PC-9 (cell line): ENCODE measurements at regions of chr22 and their contacts with region 1.

Region 1: DNA sequence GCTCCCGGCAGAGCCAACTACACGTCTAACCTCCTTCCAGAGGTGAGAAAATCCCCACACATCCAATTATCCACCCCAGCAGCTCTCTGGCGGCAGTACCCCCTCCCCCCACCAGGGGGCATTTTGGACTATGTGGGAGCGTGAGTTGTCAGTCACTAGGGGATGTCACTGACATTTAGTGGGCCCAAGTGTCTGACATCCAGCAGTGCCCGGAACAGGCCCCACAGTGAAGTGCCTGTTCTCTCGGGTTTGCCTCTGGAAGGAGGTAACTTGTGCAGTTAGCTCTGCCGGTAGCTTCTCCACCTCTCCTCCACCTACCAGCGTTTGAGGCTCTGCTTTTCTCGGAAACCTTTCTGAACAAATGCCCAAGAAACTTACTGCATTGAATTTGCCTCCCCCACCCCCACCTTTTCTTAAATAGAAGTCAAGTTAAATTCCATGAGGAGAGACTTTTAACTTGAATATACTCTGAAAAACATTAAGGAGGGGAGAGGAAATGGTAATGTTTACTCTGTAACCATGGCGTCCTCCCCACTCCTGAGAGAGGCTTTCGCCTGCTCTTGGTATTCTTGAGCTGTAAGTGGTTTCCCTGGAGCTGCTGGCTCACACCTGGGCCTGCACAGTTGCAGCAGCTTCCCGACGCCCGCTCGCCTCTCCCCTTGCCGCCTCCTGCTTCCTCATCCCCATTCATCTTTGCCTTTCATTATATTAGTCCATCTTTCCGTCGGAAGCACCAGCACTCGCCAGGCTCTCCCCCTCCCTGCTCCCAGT is 112.8 kb downstream of the WNT7B start:
- DNase-seq: peak; percentile 49 to 68
- H3K4me3 ChIP-seq: no peak overlapping the region
- H3K27ac ChIP-seq: no peak overlapping the region
- H3K4me1 ChIP-seq: peaks cover 7% of the 10 kb centered on the region; the same call in 1 of the 2 replicates
- H3K27me3 ChIP-seq: no peaks in the 10 kb centered on the region
- CTCF ChIP-seq: peak; percentile 98

Region 2: GRCh38 chr22:45887202-45888131 is 23.3 kb after region 1 on chr22:
- CTCF ChIA-PET with region 1: no interaction called
- POLR2A ChIA-PET with region 1: no interaction called
- intact Hi-C with region 1: loop called (anchors 2 kb)
- DNase-seq: peak; percentile 90 to 96
- H3K4me3 ChIP-seq: no peak overlapping the region
- H3K27ac ChIP-seq: no peak overlapping the region
- H3K4me1 ChIP-seq: peaks cover 15% of the 10 kb centered on the region
- H3K27me3 ChIP-seq: no peaks in the 10 kb centered on the region
- CTCF ChIP-seq: no peak

Region 3: GRCh38 chr22:45903355-45904149 is 39.4 kb after region 1 on chr22:
- CTCF ChIA-PET with region 1: interaction called, 10 read pairs
- POLR2A ChIA-PET with region 1: interaction called, 3 read pairs
- intact Hi-C with region 1: no loop called
- DNase-seq: peak; percentile 72 to 87
- H3K4me3 ChIP-seq: peak overlapping the region; percentile 37; the same call in 1 of the 2 replicates
- H3K27ac ChIP-seq: no peak overlapping the region
- H3K4me1 ChIP-seq: peaks cover 23% of the 10 kb centered on the region
- H3K27me3 ChIP-seq: no peaks in the 10 kb centered on the region
- CTCF ChIP-seq: no peak

Region 4: DNA sequence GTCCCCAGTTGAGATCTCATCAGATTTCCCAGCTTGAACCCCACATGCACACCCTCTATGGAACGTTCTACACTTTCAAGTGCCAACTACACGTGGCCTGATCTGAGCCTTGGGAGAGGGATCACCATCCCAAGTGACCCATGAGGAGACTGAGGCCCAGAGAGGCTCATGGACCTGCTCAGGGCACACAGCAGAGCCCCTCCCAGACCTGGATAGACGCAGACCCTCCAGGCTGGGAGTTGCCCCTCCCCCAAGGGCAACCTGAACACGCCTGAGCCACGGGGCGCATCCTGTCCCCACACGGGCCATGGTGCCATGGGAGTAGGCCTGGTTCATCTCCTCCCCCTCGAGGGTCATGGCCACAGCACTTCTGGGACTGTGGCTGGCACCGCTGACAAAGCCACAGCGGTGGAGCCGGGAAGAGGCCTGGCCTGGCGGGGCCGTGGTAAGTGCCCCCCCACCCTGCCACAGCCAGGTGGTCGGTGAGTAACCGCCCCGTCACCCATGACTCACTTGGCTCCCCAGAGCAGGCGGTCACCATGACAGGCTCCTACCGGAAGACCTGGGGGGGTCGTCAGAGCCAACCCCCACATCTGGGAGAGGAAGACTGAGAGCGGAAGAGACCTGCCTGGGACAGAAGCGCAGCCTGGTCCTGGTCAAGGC is 104.7 kb after region 1 on chr22:
- CTCF ChIA-PET with region 1: interaction called, 7 read pairs
- POLR2A ChIA-PET with region 1: interaction called, 17 read pairs
- intact Hi-C with region 1: loop called (anchors 2 kb)
- DNase-seq: peak in 1 of 2 experiments; percentile 79
- H3K4me3 ChIP-seq: peak overlapping the region; percentile 38; the same call in 1 of the 2 replicates
- H3K27ac ChIP-seq: peak overlapping the region; percentile 62
- H3K4me1 ChIP-seq: peaks cover 41% of the 10 kb centered on the region
- H3K27me3 ChIP-seq: no peaks in the 10 kb centered on the region
- CTCF ChIP-seq: no peak

Region 5: GRCh38 chr22:46084943-46085830 is 221.0 kb after region 1 on chr22:
- CTCF ChIA-PET with region 1: no interaction called
- POLR2A ChIA-PET with region 1: interaction called, 18 read pairs
- intact Hi-C with region 1: no loop called
- DNase-seq: no peak
- H3K4me3 ChIP-seq: peak overlapping the region; percentile 25; the same call in 1 of the 2 replicates
- H3K27ac ChIP-seq: peak overlapping the region; percentile 74
- H3K4me1 ChIP-seq: peaks cover 30% of the 10 kb centered on the region
- H3K27me3 ChIP-seq: no peaks in the 10 kb centered on the region
- CTCF ChIP-seq: no peak